Activated naive CD4-positive, alpha-beta T cell treated with anti-CD3 and anti-CD28 coated beads for 36 hours (primary cell): ENCODE measurements at regions of chr3 and their contacts with region 1.

Region 1: DNA sequence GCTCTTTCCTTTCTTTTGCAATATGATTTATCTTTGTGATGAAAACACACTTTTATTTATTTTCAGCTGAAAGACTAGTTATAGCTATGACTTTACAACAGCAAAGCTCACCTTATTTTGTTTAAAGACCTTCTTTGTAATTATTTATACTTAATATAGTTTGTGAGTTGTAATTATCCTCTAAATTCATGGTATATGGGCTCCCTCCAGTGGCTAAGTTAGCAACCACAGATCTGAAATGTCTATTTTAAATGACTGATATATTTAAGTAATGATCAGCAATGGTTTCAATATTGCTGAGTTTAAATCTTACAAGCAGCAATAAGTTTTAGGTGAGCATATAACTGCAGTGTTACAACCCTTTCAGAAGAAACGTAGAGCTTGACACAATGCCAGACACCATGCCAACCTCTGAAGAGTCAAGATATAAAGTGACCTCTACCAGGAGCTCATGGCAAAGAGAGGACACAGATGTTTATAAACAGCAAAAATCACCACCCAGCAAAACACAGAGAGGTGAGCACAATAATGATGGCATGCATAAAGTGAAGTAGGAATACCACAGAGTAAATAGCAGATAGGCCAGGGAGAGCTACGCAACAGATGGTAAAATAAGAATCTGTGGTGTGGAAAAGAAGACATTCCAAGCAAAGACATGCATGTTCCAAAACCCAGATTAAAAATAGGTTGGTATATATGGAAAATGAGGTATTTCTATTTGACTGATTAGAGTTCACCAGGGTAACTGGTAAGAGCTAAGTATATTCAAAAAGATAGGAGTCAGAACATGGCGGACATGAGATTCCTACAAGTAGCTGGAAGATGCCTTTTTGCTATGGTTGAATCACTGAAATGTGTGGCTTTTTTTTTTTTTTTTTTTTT is 143.7 kb upstream of the ZNF385D start:
- DNase-seq: no peak
- H3K4me3 Mint-ChIP-seq: no peak overlapping the region
- H3K27ac Mint-ChIP-seq: no peak overlapping the region
- H3K4me1 Mint-ChIP-seq: no peaks in the 10 kb centered on the region
- H3K27me3 Mint-ChIP-seq: no peaks in the 10 kb centered on the region

Region 2: DNA sequence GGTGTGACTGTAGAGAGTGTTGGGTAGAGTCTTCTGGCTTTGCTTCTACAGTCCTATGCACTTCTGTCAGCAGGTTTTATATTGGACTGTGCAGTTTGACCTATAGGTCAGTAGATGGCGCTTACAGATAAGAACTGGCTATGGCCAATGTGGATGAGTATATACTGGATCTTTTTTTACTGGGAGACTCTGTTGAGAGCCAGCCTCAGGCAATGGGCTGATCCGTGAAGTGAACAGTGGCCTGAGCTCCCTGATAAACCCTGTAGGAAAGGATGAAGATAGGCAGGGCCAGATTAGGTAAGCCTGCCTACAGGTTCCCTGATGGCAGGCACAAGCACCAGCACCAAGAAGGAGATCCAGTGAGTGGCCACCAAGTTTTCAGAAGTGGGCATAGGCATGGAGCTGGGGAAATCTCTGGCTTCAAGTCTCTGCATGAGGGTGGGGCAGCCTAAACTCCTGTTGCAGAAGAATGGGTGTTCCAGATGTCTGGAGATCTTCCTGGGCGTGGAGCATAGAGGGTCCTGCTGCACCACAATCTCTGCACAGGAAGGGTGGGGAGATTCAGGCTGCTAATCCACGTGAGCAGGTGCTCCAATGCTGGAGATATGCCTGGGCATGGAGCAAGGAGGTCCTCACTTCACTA is 1382.7 kb before region 1 on chr3:
- CTCF ChIA-PET with region 1: no interaction called
- intact Hi-C with region 1: loop called (anchors 1 kb)
- DNase-seq: no peak
- H3K4me3 Mint-ChIP-seq: no peak overlapping the region
- H3K27ac Mint-ChIP-seq: no peak overlapping the region
- H3K4me1 Mint-ChIP-seq: no peaks in the 10 kb centered on the region
- H3K27me3 Mint-ChIP-seq: no peaks in the 10 kb centered on the region